ENCODE measurements at regions of chr17 and their contacts with region 1.

Region 1: DNA sequence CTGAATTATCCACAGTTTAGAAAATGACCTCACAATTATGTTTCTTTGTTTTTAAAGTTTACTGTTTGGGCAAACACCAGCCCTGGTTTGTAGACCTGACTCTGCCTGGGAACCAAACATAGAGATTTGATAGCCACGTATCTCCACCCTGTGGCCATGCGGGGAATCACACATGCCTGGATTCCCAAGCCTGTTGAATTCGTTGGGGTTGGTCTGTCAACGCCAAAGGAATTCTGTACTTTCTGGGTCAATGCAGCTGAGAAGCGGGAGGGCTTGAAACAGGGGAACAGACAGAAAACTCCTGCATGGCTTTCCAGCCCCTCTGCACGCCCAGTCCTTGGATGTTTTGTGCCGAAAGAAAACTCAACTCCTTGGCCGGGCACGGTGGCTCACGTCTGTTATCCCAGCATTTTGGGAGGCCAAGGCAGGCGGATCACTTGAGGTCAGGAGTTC is 27.0 kb downstream of the CD300A start:
- DNase-seq: peak; percentile 67 to 79 (median 79)
- H3K4me3 ChIP-seq: no peak overlapping the region
- H3K4me3 Mint-ChIP-seq: no peak overlapping the region
- H3K27ac ChIP-seq: no peak overlapping the region
- H3K27ac Mint-ChIP-seq: peak overlapping the region in 1 of 7 donors; percentile 42
- H3K4me1 ChIP-seq: peaks cover 28 to 44% of the 10 kb centered on the region in 2 donors
- H3K4me1 Mint-ChIP-seq: peaks cover 41% of the 10 kb centered on the region
- H3K27me3 ChIP-seq: no peaks in the 10 kb centered on the region
- H3K27me3 Mint-ChIP-seq: peaks cover 0 to 5% (median 1%) of the 10 kb centered on the region in 3 donors
- CTCF ChIP-seq: peak; percentile 91

Region 2: DNA sequence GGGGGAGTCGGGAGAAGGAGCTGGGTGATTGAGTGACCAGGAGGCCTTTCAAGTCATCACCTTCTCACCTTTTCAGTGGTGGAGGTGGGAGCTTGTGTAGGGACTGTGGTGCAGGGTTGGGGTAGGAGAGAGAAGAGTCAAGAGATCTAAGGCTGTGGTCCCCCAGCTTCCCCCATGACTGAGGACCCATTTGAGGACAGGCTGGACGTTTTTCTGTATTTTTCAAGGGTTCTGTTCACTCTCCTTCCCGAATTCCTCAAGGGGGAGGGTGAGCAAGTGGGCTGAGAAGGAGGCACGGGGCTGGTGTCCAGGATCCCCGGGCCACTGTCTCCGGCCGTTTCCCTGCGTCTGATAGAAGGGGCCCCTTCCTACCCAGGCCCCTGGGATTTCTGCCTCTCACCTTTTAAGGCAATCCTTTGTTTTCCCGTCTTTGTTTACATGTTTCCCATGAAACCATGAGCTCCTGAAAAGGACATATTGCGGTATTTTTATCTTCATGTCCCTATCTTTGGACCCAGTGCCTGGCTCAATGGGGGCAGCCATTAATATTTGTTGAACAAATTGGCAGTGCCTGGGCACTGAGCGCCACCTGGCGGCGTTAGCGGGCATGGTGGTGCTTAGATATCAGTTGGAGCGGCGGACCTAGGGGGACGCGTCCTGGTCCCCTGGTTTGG is 36.1 kb before region 1 on chr17:
- intact Hi-C with region 1: loop called (anchors 5 kb)
- DNase-seq: peak; percentile 67 to 83 (median 74)
- H3K4me3 ChIP-seq: no peak overlapping the region
- H3K4me3 Mint-ChIP-seq: peak overlapping the region in 1 of 2 donors; percentile 39
- H3K27ac ChIP-seq: no peak overlapping the region
- H3K27ac Mint-ChIP-seq: peak overlapping the region in 1 of 7 donors; percentile 66
- H3K4me1 ChIP-seq: peaks cover 32 to 41% of the 10 kb centered on the region in 2 donors
- H3K4me1 Mint-ChIP-seq: peaks cover 24% of the 10 kb centered on the region
- H3K27me3 ChIP-seq: peaks cover 0 to 8% of the 10 kb centered on the region in 2 donors
- H3K27me3 Mint-ChIP-seq: peaks cover 8 to 22% (median 9%) of the 10 kb centered on the region in 3 donors
- CTCF ChIP-seq: peak; percentile 97

Region 3: GRCh38 chr17:74467221-74467951 is 26.0 kb before region 1 on chr17:
- intact Hi-C with region 1: loop called in 1 of 2 experiments (anchors 2 kb)
- DNase-seq: peak; percentile 70 to 87 (median 84)
- H3K4me3 ChIP-seq: peak overlapping the region; percentile 95 to 99 (median 95)
- H3K4me3 Mint-ChIP-seq: no peak overlapping the region
- H3K27ac ChIP-seq: peak overlapping the region; percentile 87 to 92
- H3K27ac Mint-ChIP-seq: peak overlapping the region in 3 of 7 donors; percentile 91 to 96 (median 92)
- H3K4me1 ChIP-seq: peaks cover 66 to 76% of the 10 kb centered on the region in 2 donors
- H3K4me1 Mint-ChIP-seq: peaks cover 24% of the 10 kb centered on the region
- H3K27me3 ChIP-seq: no peaks in the 10 kb centered on the region
- H3K27me3 Mint-ChIP-seq: no peaks in the 10 kb centered on the region
- CTCF ChIP-seq: no peak